ENCODE measurements at regions of chr11 and their contacts with region 1.

Region 1: GRCh38 chr11:64652586-64653387 is 61.8 kb downstream of the SLC22A12 start:
- DNase-seq: peak; percentile 93
- H3K4me3 ChIP-seq: no peak overlapping the region; a peak in 1 of 4 replicates
- H3K27ac ChIP-seq: no peak overlapping the region
- H3K4me1 ChIP-seq: peaks cover 0 to 7% of the 10 kb centered on the region in 2 experiments; a peak in 1 of 4 replicates
- H3K27me3 ChIP-seq: no peaks in the 10 kb centered on the region
- CTCF ChIP-seq: peak; percentile 83
- EP300 ChIP-seq: no peak
- RAD21 ChIP-seq: peak; percentile 93

Region 2: DNA sequence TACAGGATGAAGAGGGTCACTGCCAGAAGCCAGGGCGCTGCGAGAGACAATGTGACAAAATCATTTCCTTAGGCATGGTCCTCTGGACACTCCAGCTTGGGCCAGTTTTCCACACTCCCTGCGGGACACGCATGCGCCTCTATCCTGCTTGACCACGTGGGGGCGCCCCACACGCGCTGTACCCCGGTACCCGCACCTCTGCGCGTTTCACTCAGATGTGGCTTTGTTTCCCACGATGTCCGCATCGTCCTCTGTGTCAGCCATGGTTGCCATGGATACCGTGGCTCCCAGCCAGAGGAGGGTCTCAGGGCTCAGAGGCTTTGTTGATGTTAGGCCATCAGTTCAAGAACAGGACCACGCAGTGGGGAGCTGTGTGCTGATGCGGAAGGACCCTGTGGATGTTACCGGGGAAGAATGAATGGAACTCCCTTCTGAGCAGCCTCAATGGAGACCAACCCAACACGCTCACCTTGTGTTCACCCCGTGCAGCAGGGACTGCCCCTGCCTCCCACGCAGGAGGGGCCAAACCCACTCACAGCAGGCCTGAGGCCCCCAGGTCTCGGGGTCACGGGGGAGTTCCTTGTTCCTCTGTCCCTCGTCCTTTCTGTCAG is 162.9 kb before region 1 on chr11:
- CTCF ChIA-PET with region 1: interaction called, 104 read pairs
- POLR2A ChIA-PET with region 1: no interaction called
- DNase-seq: peak; percentile 84
- H3K4me3 ChIP-seq: no peak overlapping the region; a peak in 1 of 4 replicates
- H3K27ac ChIP-seq: no peak overlapping the region
- H3K4me1 ChIP-seq: peaks cover 0 to 2% of the 10 kb centered on the region in 2 experiments; a peak in 1 of 4 replicates
- H3K27me3 ChIP-seq: peaks cover 10% of the 10 kb centered on the region; the same call in 1 of the 2 replicates
- CTCF ChIP-seq: peak; percentile 66
- EP300 ChIP-seq: no peak
- RAD21 ChIP-seq: peak; percentile 77

Region 3: GRCh38 chr11:64546600-64546999 is 106.2 kb before region 1 on chr11:
- CTCF ChIA-PET with region 1: interaction called, 27 read pairs
- POLR2A ChIA-PET with region 1: no interaction called
- DNase-seq: no peak
- H3K4me3 ChIP-seq: no peak overlapping the region
- H3K27ac ChIP-seq: no peak overlapping the region
- H3K4me1 ChIP-seq: no peaks in the 10 kb centered on the region
- H3K27me3 ChIP-seq: no peaks in the 10 kb centered on the region; the same call in 1 of the 2 replicates
- CTCF ChIP-seq: no peak
- EP300 ChIP-seq: no peak
- RAD21 ChIP-seq: no peak

Region 4: DNA sequence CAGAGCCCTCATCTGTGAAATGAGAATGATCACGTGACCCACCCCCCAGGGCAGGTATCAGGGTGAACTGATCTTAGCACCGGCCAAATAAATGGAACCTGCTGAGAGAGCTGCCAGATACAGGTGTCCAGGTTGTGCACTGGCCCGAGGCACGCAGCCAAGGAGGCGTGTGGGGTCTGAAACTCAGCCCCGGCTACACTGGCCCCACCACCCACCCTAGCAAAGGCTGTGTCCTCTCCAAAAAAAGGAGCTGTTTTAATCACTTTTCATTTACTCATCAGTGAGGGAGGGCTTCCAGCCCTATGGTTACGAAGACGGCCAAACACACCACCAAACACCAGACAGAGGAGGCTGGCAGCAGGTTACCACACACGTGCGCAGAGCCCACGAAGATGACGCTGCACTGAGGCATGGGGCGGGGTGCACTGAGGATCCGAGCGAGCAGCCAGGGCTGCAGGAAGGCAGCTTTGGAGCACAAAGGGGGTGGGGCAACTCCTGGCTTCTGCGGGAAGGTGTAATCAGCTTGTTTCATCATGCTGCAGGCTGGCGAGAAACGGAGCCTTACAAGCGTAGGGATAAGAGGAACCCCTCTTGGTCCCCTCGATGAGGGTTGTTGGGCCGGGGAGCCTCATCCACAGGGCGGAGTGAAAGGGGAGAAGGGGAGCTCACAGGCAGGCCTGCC is 81.2 kb before region 1 on chr11:
- CTCF ChIA-PET with region 1: interaction called, 30 read pairs
- POLR2A ChIA-PET with region 1: no interaction called
- DNase-seq: no peak
- H3K4me3 ChIP-seq: no peak overlapping the region
- H3K27ac ChIP-seq: no peak overlapping the region
- H3K4me1 ChIP-seq: peaks cover 0 to 19% of the 10 kb centered on the region in 2 experiments; a peak in 2 of 4 replicates
- H3K27me3 ChIP-seq: no peaks in the 10 kb centered on the region; the same call in 1 of the 2 replicates
- CTCF ChIP-seq: no peak
- EP300 ChIP-seq: no peak
- RAD21 ChIP-seq: no peak

Region 5: DNA sequence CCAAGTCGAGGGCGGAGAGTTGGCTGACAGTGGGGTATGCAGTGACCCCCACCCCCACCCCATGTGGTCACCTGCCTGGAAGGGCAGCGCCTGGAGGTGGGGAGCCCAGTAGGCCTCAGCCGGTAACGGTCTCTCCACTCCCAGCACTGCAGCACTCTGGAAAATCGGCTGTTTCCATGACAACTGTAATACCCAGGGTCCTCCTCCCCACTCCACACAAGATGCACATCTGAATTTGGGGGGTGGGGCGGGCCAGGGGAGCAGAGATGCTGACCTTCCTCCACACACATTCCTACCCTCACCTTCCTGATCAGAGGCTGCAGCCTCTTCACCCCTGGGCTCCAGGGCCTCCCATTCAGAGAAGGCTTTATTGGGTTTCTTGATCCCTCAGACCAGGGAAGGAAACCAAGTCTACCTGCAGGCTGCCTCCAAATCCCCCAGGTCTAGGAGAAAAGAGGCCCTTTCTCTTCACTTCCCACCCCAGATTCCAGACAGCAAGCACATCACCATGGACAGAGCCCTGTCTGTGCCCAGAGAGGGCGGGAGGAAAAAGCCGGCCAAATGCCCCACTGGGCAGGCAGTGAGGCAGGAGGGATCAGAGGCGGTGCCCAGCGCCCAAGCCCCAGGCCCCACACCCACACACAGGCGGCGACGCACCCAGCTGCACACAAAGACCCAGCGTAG is 15.3 kb before region 1 on chr11:
- CTCF ChIA-PET with region 1: interaction called, 61 read pairs
- POLR2A ChIA-PET with region 1: no interaction called
- DNase-seq: peak; percentile 70
- H3K4me3 ChIP-seq: peak overlapping the region; percentile 16 to 34; a peak in 2 of 4 replicates
- H3K27ac ChIP-seq: peak overlapping the region in 1 of 2 experiments; percentile 91; a peak in 2 of 4 replicates
- H3K4me1 ChIP-seq: peaks cover 0 to 59% of the 10 kb centered on the region in 2 experiments; a peak in 1 of 4 replicates
- H3K27me3 ChIP-seq: peaks cover 56% of the 10 kb centered on the region
- CTCF ChIP-seq: no peak
- EP300 ChIP-seq: no peak
- RAD21 ChIP-seq: no peak

Region 6: GRCh38 chr11:64936539-64936938 is 283.8 kb after region 1 on chr11:
- CTCF ChIA-PET with region 1: no interaction called
- POLR2A ChIA-PET with region 1: no interaction called
- DNase-seq: no peak
- H3K4me3 ChIP-seq: no peak overlapping the region
- H3K27ac ChIP-seq: no peak overlapping the region
- H3K4me1 ChIP-seq: peaks cover 0 to 6% of the 10 kb centered on the region in 2 experiments; a peak in 1 of 4 replicates
- H3K27me3 ChIP-seq: no peaks in the 10 kb centered on the region
- CTCF ChIP-seq: no peak
- EP300 ChIP-seq: no peak
- RAD21 ChIP-seq: no peak